ENCODE measurements at regions of chr2 and their contacts with region 1.

Region 1: DNA sequence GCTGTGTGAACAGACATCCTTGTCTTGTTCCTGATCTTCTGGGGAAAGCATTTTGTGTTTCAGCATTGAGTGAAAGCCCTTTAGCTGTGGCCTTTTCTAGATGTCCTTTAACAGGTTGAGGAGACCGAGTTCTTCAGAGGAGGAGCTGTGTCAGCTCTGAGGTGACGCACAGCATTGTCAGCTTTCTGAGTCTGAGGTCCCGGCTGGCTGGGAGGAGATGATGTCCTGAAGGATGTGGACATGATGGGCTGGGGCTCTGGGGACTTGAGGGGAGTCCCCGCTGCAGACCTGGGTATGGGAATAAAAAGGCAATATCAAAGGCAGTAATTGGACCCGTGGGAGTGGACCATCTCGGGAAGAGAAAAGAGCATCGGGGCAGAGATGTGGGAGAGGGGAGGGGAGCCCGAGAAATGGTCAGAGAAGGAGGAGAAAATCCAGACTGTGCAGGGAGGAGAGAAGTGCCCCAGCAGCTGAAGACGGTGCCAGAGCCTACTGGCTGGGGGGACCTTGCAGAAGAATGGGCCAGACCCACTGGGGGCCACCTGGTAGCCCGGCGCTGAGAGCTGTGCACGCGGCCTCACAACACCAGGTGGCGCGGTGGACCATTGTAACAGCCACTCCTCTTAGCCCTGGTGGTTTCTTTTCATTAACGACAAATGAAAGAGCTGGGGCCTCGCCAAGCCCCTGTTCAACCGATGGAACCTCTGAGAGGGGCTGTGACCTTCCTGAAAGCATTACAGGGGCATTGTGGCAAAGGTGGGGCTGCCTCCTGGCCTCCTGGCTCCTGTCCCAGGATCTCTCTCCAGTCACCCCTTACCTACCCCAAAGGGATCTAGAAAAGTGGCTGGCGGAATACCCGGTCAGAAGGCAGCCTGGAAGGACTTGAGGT is 61.6 kb downstream of the ST3GAL5 start:
- DNase-seq: no peak
- H3K4me3 ChIP-seq: no peak overlapping the region
- H3K27ac ChIP-seq: no peak overlapping the region
- H3K27me3 ChIP-seq: peaks cover 5% of the 10 kb centered on the region
- CTCF ChIP-seq: peak; percentile 86

Region 2: DNA sequence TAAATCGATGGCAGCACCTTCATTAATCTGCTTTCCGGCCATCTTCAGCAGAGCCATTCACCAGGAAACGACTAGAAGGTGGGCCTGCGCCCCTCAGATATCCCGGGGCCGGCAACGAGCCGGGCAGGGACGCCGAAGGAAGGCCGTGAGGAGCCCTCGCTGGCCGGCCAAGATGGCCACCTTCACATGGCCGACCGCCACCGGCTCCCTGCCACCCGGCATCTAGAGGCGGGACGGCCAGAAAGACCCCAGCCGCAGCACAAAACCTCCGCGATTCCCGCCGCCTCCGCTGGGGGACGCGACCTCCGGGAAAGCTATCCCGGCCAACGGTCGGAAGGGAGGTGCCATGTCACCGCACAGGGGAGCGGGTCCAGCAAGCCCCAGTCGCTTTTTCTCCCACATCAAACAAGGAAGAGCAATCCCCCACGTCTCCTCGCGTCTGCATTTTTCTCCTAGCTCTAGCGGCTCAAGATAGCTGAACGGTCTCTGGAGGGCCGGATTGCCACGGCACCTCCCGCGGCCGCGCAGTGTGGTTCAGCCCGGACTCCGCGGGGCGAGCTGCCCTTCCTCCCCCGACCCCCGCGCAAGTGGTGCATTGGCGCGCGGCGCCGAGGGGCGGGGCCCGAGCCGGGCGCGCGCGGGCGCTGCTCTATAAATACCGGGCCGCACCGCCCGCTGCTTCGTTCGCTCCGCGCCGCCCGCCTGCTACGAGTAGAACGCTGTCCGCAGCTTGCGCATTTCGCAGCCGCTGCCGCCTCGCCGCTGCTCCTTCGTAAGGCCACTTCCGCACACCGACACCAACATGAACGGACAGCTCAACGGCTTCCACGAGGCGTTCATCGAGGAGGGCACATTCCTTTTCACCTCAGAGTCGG is 288.5 kb before region 1 on chr2 and contains the start of gene MAT2A:
- CTCF ChIA-PET with region 1: no interaction called
- POLR2A ChIA-PET with region 1: no interaction called
- DNase-seq: peak; percentile 80
- H3K4me3 ChIP-seq: peak within 1 kb of the TSS; percentile 100
- H3K27ac ChIP-seq: peak within 1 kb of the TSS; percentile 99
- H3K27me3 ChIP-seq: no peaks in the 10 kb centered on the region
- CTCF ChIP-seq: peak; percentile 80
- polyA plus RNA-seq, gene MAT2A: 362 and 409 TPM in 2 replicates

Region 3: DNA sequence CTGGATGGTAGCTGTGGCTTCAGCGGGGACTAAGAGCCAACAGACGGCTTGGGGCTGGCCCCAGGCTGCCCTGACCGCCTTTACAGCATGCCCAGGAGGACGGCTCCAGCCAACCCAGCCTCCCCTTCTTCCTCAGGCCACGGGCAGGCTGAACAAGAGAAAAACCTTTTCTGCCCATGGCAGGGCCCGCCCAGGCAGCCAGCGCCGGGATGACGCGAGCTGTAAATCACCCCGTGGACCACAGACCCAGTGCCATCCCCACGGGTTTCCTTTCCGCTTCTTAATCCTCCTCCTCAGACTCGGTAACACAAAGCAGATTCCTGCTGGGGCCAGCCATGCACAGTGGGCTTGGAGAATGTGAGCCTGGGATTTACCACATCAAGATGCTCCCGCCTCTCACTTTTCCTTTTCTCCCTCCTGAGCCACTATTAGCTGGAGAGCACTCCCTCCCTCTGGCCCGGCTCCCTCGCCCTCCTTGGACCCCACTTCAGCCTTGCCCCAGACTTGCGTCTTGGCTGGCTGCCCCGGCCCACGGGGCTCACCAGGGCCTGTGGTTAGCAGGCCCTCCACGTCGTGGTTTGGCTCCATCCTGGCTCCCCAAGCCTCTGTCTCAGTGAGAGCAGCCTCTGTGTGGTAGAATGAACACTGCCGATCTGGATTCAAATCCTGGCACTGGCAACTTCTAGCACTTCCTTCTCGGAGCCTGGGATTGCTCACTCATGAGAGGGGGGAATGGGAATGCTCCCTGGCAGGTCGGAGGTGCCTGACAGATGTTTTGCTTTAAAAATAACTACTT is 42.0 kb before region 1 on chr2:
- CTCF ChIA-PET with region 1: no interaction called
- POLR2A ChIA-PET with region 1: no interaction called
- DNase-seq: no peak
- H3K4me3 ChIP-seq: no peak overlapping the region
- H3K27ac ChIP-seq: no peak overlapping the region
- H3K27me3 ChIP-seq: no peaks in the 10 kb centered on the region
- CTCF ChIP-seq: no peak

Region 4: DNA sequence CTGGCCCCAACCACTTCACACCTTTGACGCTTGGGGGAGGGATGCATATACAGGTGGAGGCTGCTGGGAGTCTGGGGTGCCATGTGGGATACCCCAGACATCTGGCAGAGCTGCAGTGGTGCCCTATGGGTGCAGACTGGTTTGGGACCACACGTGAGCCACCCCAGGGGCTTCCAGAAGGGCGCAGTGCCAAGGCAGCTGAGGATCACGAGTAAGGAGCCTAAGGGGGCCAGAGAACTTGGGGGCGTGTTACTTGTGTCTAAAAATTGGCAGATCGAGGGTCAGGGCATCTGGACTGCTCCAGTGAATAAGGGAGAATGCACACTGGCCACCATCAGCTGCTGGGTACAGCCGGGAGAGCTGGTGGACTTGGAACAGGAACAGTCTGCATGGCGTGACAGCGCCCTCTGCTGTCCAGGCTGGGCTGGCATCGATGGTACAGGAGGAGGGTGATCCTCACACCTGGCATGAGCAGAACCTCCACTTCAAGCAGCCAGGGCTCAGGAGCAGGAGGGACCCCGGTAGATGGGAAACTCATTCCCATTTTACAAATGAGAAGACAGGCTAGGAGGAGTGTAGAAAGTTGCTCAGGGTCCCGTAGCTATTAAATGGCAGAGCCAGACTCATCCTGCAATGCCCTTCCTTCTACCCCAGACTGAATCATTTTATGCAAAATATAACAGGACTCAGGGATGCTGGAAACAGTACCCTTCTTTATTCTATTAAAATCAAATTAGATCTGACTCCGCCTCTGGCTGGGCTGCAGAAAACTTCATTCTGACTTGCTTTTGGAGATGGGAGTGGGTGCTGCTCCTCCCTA is 13.0 kb before region 1 on chr2:
- CTCF ChIA-PET with region 1: interaction called, 14 read pairs
- POLR2A ChIA-PET with region 1: no interaction called
- DNase-seq: peak; percentile 70
- H3K4me3 ChIP-seq: no peak overlapping the region
- H3K27ac ChIP-seq: no peak overlapping the region
- H3K27me3 ChIP-seq: no peaks in the 10 kb centered on the region
- CTCF ChIP-seq: peak; percentile 99

Region 5: GRCh38 chr2:85861180-85861579 is 33.9 kb after region 1 on chr2:
- CTCF ChIA-PET with region 1: interaction called, 11 read pairs
- POLR2A ChIA-PET with region 1: no interaction called
- DNase-seq: no peak
- H3K4me3 ChIP-seq: no peak overlapping the region
- H3K27ac ChIP-seq: no peak overlapping the region
- H3K27me3 ChIP-seq: no peaks in the 10 kb centered on the region
- CTCF ChIP-seq: no peak

Region 6: DNA sequence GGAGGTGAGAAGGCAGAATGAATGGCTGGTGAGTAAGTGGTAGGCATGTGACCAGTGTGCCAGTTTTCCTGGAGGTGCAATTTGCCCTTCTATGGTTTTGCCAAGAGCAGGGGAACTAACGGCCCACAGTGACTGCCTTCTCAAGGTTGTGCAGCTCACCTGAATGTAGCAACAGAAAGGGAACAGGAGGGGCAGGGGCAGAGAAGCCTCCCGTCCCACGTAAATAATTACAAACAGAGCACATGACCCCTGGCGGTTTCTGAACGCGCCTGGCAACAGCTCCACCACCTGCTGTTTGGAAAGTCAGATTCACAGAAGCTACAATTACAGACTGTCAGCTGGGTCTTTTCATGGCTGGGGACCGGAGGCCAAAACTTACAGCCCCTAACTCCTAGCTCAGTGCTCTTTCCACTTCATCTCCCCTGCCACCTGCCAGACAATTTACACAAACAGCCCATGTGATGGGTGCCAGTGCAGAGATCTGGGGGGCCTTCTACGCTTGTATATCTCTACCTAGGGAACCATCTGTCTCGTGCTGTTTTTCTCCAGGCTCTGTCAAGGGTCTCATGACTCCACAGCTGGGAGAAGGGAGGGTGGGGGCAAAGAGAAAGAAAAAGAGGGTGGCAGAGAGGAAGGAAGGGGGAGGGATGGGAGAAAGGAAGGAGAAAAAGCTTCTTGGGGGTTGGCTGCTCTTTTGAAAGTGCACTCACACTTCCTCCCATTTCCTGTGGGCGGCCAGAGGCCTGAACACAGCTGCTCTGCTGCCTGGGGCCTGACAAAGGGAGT is 208.8 kb after region 1 on chr2:
- CTCF ChIA-PET with region 1: interaction called, 28 read pairs
- POLR2A ChIA-PET with region 1: no interaction called
- DNase-seq: peak; percentile 76
- H3K4me3 ChIP-seq: 0 out of 2 replicates have a peak overlapping the region, but pooled peaks have one; percentile 4
- H3K27ac ChIP-seq: peak overlapping the region; percentile 96
- H3K27me3 ChIP-seq: no peaks in the 10 kb centered on the region
- CTCF ChIP-seq: peak; percentile 47

Region 7: DNA sequence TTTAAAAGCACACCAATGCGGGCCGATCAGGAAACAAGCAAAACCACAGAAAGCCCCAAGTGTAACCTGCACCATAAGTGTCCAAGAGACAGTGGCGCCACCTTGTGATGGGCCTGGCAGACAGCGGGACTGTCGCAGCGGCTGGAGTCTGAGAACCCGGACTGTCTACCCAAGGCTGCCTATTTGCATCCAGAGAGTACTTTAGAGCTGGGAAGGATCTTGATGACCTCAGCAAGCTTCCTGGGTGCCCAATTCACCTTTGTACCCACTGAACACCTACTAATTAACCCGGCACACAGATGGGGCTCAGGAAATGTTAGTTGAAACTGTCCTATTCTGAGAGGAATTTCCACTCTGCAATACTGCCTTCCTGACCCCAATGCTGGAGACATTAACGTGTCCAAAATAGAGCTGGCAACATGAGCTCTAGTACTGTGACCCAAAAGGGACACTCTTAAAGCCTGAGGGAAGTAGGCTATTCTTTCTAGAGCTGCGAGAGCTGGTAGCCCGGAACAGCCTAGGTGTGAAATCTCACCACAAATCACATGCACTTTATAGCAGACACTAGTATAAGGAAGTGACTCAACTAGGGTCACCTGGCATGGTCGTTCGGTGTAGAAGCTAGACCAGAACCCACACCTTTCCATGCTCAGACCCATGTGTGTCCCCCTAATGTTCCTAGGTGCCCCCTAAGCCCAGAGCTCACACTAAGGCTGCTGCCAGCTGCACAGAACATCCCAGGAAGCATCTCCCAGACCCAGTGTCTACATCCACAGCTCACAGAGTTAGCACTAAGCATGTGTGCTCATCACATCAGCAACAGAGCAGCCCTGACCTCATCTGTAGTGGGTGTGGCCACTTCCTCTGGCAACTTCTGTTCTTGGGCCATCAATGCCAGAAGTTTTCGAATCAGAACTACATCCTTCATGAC is 253.0 kb after region 1 on chr2:
- CTCF ChIA-PET with region 1: interaction called, 375 read pairs
- POLR2A ChIA-PET with region 1: interaction called, 3 read pairs
- DNase-seq: peak; percentile 21
- H3K4me3 ChIP-seq: no peak overlapping the region
- H3K27ac ChIP-seq: no peak overlapping the region
- H3K27me3 ChIP-seq: no peaks in the 10 kb centered on the region
- CTCF ChIP-seq: peak; percentile 84